ENCODE measurements at regions of chr1 and their contacts with region 1.

Region 1: GRCh38 chr1:160291248-160292220 is 6.6 kb upstream of the PEX19 start:
- DNase-seq: peak in 5 of 6 donors; percentile 35 to 76 (median 54)
- ATAC-seq: peak; percentile 86 to 98 (median 93)
- H3K4me3 ChIP-seq: no peak overlapping the region
- H3K27ac ChIP-seq: no peak overlapping the region
- H3K4me1 ChIP-seq: no peaks in the 10 kb centered on the region
- H3K27me3 ChIP-seq: no peaks in the 10 kb centered on the region
- CTCF ChIP-seq: peak; percentile 54 to 85 (median 67)

Region 2: GRCh38 chr1:160078512-160079195 is 212.9 kb before region 1 on chr1:
- intact Hi-C with region 1: no loop called
- DNase-seq: peak in 3 of 6 donors; percentile 35 to 76 (median 37)
- ATAC-seq: peak; percentile 76 to 90 (median 85)
- H3K4me3 ChIP-seq: no peak overlapping the region
- H3K27ac ChIP-seq: no peak overlapping the region
- H3K4me1 ChIP-seq: no peaks in the 10 kb centered on the region
- H3K27me3 ChIP-seq: peaks cover 0 to 6% (median 3%) of the 10 kb centered on the region in 4 donors
- CTCF ChIP-seq: peak; percentile 26 to 69 (median 60)

Region 3: DNA sequence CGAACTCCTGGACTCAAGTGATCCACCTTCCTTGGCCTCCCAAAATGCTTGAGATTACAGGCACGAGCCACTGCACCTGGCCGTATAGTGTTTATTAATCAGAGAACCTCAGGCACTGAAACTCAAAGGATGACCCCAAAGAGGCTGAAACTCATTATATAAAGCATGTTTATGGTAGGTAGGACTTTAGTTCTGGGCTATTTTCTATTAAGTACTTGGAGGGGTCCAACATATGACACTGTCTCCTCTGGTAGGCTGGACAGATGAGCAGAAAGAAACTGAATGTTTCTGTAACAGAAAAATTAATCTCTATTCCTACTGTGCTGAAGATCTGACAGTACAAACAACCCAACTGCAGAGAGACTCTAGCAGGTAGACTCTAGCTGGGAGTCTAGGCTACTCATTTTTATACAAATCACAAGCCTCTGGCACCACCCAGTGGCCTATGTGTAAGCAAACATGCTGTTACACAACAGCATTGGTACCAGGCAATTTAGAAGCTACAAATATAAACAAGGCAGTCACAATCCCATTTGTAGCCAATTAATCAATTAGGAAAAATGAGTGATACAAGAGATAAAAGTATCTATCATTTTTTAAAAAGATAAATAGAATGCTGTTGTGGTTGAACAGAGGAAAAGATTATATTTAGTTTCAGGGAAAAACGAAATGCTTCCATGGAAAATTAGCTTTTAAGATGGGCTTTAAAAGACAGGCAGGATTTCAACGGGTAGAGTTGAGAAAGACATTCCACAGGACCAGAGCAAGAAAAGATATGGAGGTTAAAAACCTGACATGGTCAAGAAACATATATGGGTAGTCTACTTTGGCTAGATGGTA is 39.6 kb before region 1 on chr1:
- intact Hi-C with region 1: no loop called
- DNase-seq: peak in 5 of 6 donors; percentile 55 to 72 (median 69)
- ATAC-seq: peak; percentile 90 to 97 (median 96)
- H3K4me3 ChIP-seq: no peak overlapping the region
- H3K27ac ChIP-seq: peak overlapping the region in 2 of 4 donors; percentile 1 to 22
- H3K4me1 ChIP-seq: peaks cover 14 to 30% (median 26%) of the 10 kb centered on the region in 3 donors
- H3K27me3 ChIP-seq: no peaks in the 10 kb centered on the region
- CTCF ChIP-seq: peak; percentile 39 to 59 (median 47)

Region 4: GRCh38 chr1:160338580-160338979 is 47.0 kb after region 1 on chr1:
- intact Hi-C with region 1: loop called in 1 of 3 experiments (anchors 5 kb)
- DNase-seq: no peak
- ATAC-seq: no peak
- H3K4me3 ChIP-seq: no peak overlapping the region
- H3K27ac ChIP-seq: no peak overlapping the region
- H3K4me1 ChIP-seq: peaks cover 8 to 14% (median 9%) of the 10 kb centered on the region in 3 donors
- H3K27me3 ChIP-seq: no peaks in the 10 kb centered on the region
- CTCF ChIP-seq: no peak